T-cell (primary cell): ENCODE measurements at regions of chr20 and their contacts with region 1.

Region 1: GRCh38 chr20:21315138-21315537 is 12.0 kb downstream of the XRN2 start:
- DNase-seq: peak in 1 of 35 experiments; percentile 11
- ATAC-seq: peak in 1 of 4 experiments; percentile 40
- H3K4me3 ChIP-seq: no peak overlapping the region
- H3K4me3 Mint-ChIP-seq: peak overlapping the region in 1 of 3 donors; percentile 47
- H3K27ac ChIP-seq: no peak overlapping the region
- H3K27ac Mint-ChIP-seq: no peak overlapping the region
- H3K4me1 ChIP-seq: peaks cover 2 to 29% of the 10 kb centered on the region in 2 experiments
- H3K4me1 Mint-ChIP-seq: peaks cover 84 to 87% (median 87%) of the 10 kb centered on the region in 3 donors
- H3K27me3 ChIP-seq: no peaks in the 10 kb centered on the region
- H3K27me3 Mint-ChIP-seq: no peaks in the 10 kb centered on the region

Region 2: DNA sequence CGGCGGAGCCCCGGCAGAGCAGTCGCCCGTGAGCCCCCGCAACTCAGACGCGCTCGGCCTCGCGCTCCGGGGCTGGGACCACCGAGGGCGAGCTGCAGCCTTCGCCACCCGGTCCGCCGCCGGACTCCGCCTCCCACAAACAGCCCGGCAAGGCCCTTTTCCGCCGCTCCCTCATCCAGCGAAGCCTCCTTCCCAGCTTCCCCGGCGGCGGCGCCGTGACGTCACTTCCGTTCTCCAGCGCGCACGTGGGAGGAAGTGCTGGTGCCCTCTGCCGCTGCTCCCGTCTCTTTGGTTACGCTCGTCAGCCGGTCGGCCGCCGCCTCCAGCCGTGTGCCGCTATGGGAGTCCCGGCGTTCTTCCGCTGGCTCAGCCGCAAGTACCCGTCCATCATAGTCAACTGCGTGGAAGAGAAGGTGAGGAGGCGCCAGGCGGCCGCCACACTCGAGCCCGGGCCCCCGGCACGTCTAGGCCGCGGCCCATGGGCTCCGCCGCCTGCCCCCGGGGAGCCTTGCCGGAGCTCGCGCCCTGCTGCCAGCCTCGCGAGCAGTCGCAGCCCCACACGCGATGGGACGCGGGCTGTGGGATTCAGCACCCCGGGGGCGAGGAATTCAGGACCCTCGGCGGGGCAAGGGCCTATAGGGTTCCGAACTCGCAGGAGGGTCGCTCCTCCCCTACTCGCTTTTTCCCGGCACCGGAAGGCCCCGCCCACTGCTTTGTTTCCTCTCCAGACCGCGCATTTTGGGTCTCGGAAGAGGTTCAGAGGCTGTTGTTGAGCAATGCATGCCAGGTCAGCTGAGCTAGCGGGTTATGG is 11.9 kb before region 1 on chr20 and contains the start of gene XRN2:
- CTCF ChIA-PET with region 1: interaction called in 1 of 2 experiments, 3 read pairs
- POLR2A ChIA-PET with region 1: interaction called in 1 of 2 experiments, 11 read pairs
- DNase-seq: peak; percentile 84 to 97 (median 92)
- ATAC-seq: peak; percentile 90 to 91 (median 90)
- H3K4me3 ChIP-seq: peak within 1 kb of the TSS; percentile 76
- H3K4me3 Mint-ChIP-seq: peak within 1 kb of the TSS; percentile 93 to 97 (median 95)
- H3K27ac ChIP-seq: peak within 1 kb of the TSS; percentile 83
- H3K27ac Mint-ChIP-seq: peak within 1 kb of the TSS; percentile 97 to 99
- H3K4me1 ChIP-seq: peaks cover 7 to 25% of the 10 kb centered on the region in 2 experiments
- H3K4me1 Mint-ChIP-seq: peaks cover 27 to 42% (median 31%) of the 10 kb centered on the region in 3 donors
- H3K27me3 ChIP-seq: peaks cover 0 to 3% of the 10 kb centered on the region in 2 experiments
- H3K27me3 Mint-ChIP-seq: peaks cover 2 to 3% of the 10 kb centered on the region in 2 donors
- total RNA-seq, gene XRN2: 46.3 to 62.0 (median 49.7) TPM